Endothelial cell of umbilical vein (primary cell): ENCODE measurements at regions of chr11 and their contacts with region 1.

Region 1: GRCh38 chr11:128026596-128026995 is 560.8 kb downstream of the ETS1 start:
- DNase-seq: peak; percentile 81
- H3K4me3 ChIP-seq: no peak overlapping the region
- H3K27ac ChIP-seq: peak overlapping the region; percentile 39
- H3K4me1 ChIP-seq: peaks cover 25% of the 10 kb centered on the region
- H3K27me3 ChIP-seq: no peaks in the 10 kb centered on the region
- CTCF ChIP-seq: no peak
- POLR2A ChIP-seq: no peak

Region 2: DNA sequence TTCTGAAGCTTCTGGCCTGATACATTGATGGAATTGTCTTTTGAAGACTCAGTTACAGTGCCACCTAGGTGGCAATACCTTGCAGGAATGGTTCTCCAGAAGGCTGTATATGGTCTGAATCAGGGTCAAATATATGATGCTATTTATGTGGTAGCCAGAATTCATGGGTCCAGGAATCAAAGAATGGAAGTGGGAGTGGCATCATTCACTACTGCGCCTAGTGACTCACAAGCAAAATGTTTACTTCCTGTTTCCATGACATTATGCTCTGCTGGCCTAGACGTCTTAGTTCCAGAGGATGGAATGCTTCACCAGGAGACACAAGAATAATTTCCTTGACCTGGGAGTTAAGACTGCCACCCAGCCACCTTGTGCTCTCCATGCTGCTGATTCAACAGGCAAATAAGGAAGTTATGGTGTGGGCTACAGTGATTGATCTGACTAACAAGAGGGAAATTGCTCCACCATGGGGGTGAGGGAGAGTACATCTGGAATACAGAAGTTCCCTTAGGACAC is 68.9 kb after region 1 on chr11:
- CTCF ChIA-PET with region 1: no interaction called
- POLR2A ChIA-PET with region 1: no interaction called
- dilution Hi-C with region 1: no loop called
- intact Hi-C with region 1: loop called (anchors 1 kb)
- DNase-seq: peak; percentile 95
- H3K4me3 ChIP-seq: no peak overlapping the region
- H3K27ac ChIP-seq: peak overlapping the region; percentile 94
- H3K4me1 ChIP-seq: peaks cover 14% of the 10 kb centered on the region
- H3K27me3 ChIP-seq: no peaks in the 10 kb centered on the region
- CTCF ChIP-seq: peak; percentile 14 to 28
- POLR2A ChIP-seq: no peak

Region 3: DNA sequence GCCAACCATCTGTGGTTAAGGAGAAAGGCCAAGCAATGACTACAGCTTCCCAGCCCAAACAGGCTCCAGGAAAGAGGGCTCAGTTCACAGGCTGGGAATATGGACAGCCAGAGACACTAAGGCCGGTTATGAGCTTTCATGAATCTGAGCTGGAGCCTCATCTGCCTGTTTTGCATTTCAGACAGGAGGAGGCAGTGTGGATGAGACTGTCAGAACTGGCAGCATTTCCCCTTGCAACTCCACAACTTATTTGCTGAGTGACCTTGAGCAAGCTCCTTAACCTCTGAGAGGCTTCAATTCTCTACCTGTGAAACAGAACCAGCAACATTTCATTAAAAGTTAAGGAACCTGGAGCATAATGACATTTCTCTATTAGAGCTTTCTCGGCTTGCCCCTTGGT is 296.8 kb after region 1 on chr11:
- CTCF ChIA-PET with region 1: no interaction called
- POLR2A ChIA-PET with region 1: no interaction called
- dilution Hi-C with region 1: no loop called
- intact Hi-C with region 1: no loop called
- DNase-seq: peak; percentile 23
- H3K4me3 ChIP-seq: no peak overlapping the region
- H3K27ac ChIP-seq: no peak overlapping the region
- H3K4me1 ChIP-seq: peaks cover 3% of the 10 kb centered on the region
- H3K27me3 ChIP-seq: no peaks in the 10 kb centered on the region
- CTCF ChIP-seq: peak in 1 of 2 donors; percentile 20
- POLR2A ChIP-seq: no peak

Region 4: GRCh38 chr11:128859563-128860441 is 833.2 kb after region 1 on chr11:
- CTCF ChIA-PET with region 1: no interaction called
- POLR2A ChIA-PET with region 1: no interaction called
- dilution Hi-C with region 1: no loop called
- intact Hi-C with region 1: loop called (anchors 2 kb)
- DNase-seq: peak; percentile 74
- H3K4me3 ChIP-seq: no peak overlapping the region
- H3K27ac ChIP-seq: no peak overlapping the region
- H3K4me1 ChIP-seq: peaks cover 2% of the 10 kb centered on the region
- H3K27me3 ChIP-seq: no peaks in the 10 kb centered on the region
- CTCF ChIP-seq: peak; percentile 97 to 99
- POLR2A ChIP-seq: no peak

Region 5: DNA sequence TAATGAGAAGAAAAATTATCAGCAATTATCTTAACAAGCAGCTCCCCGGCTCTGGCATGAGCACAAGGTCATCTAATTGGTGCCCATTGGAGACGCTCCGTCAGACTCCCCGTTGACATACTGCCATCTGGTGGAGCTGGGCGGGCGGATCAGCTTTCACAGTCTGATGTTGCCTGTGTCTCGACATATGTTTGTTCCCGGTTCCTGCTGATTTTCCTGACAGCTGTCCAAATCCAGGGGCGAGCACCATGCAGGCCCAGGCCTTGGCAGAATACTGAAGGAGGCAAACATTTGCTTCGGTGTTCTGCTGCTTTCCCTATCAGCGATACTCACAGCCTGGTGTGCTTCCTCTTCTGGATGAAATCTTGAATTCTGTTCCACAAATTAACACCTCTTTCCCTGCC is 1305.3 kb after region 1 on chr11:
- CTCF ChIA-PET with region 1: no interaction called
- POLR2A ChIA-PET with region 1: no interaction called
- dilution Hi-C with region 1: no loop called
- intact Hi-C with region 1: loop called (anchors 1 kb)
- DNase-seq: peak; percentile 76
- H3K4me3 ChIP-seq: no peak overlapping the region
- H3K27ac ChIP-seq: no peak overlapping the region
- H3K4me1 ChIP-seq: no peaks in the 10 kb centered on the region
- H3K27me3 ChIP-seq: no peaks in the 10 kb centered on the region
- CTCF ChIP-seq: peak; percentile 91 to 92
- POLR2A ChIP-seq: no peak